PC-3 (cell line): ENCODE measurements at regions of chr14 and their contacts with region 1.

Region 1: DNA sequence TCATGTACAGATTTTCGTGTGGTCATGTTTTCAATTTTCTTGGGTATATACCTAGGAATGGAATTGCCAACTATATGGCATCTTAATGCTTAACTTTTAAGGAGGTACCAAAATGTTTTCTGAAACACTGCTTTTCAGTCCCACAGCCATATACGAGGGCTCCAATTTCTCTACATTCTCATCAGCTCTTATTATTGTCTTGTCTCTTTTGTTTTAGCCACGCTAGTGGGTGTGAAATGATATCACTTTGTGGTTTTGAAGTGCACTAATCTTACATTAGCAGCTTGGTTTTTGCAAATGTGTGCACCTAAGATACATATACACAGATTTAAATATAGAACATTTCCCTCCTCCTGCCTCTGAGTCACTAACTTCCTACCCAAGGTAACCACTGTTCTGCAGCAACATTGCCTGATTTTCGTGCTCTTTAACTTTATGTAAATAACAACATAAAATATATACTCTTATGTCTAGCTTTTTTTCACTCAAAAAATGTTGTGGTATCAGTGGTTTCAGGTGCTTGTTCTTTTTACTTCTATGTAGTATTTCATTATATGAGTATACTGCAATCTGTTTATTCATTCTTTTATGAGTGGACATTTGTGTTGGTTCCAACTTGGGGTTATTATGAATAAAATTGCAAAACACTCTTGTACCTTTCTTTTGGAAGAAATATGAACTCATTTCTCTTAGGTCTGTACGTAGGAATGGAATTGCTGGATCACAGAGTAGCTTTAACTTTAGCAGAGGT is 73.1 kb downstream of the ZFP36L1 start:
- DNase-seq: no peak
- ATAC-seq: no peak
- H3K4me3 ChIP-seq: no peak overlapping the region
- H3K27ac ChIP-seq: no peak overlapping the region
- H3K4me1 ChIP-seq: no peaks in the 10 kb centered on the region
- H3K27me3 ChIP-seq: no peaks in the 10 kb centered on the region
- CTCF ChIP-seq: no peak

Region 2: GRCh38 chr14:68513838-68514620 is 205.8 kb before region 1 on chr14:
- CTCF ChIA-PET with region 1: no interaction called
- POLR2A ChIA-PET with region 1: no interaction called
- intact Hi-C with region 1: no loop called
- DNase-seq: no peak
- ATAC-seq: no peak
- H3K4me3 ChIP-seq: no peak overlapping the region
- H3K27ac ChIP-seq: no peak overlapping the region
- H3K4me1 ChIP-seq: peaks cover 19% of the 10 kb centered on the region
- H3K27me3 ChIP-seq: no peaks in the 10 kb centered on the region
- CTCF ChIP-seq: no peak

Region 3: DNA sequence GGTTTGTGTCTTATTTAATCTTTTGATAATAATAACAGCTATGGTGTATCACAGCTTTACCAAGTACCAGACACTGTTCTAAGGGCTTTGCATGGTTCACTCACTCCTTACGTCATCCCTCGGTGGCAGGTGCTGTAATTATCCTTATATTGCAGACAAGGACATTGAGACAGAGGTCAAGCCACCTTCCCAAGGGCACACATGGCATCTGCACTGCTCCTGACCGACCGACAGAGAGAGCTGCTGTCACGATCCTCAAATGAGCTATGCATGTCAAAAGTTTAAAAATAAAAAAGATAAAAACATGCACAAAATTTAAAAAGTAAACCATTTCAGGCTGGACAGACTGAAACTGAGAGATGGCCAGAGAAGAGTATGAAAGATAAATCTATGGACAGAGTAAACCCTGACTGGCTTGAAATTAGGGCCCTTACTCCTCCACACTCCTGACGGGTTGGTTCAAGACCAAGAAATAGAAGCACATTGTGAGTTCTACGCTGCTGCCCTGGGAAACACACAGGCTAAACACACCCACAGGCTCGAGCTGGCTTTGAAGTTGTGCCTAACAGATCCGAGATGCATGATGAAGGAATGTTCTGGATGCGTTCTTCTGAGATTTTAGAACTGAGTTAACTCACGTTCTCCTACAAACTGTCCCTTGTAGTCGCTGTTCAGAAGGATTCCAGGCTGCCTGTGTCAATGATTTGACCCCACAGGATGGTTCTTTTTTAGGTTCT is 195.7 kb before region 1 on chr14:
- CTCF ChIA-PET with region 1: no interaction called
- POLR2A ChIA-PET with region 1: no interaction called
- intact Hi-C with region 1: no loop called
- DNase-seq: no peak
- ATAC-seq: no peak
- H3K4me3 ChIP-seq: no peak overlapping the region
- H3K27ac ChIP-seq: no peak overlapping the region
- H3K4me1 ChIP-seq: peaks cover 28% of the 10 kb centered on the region
- H3K27me3 ChIP-seq: no peaks in the 10 kb centered on the region
- CTCF ChIP-seq: no peak

Region 4: DNA sequence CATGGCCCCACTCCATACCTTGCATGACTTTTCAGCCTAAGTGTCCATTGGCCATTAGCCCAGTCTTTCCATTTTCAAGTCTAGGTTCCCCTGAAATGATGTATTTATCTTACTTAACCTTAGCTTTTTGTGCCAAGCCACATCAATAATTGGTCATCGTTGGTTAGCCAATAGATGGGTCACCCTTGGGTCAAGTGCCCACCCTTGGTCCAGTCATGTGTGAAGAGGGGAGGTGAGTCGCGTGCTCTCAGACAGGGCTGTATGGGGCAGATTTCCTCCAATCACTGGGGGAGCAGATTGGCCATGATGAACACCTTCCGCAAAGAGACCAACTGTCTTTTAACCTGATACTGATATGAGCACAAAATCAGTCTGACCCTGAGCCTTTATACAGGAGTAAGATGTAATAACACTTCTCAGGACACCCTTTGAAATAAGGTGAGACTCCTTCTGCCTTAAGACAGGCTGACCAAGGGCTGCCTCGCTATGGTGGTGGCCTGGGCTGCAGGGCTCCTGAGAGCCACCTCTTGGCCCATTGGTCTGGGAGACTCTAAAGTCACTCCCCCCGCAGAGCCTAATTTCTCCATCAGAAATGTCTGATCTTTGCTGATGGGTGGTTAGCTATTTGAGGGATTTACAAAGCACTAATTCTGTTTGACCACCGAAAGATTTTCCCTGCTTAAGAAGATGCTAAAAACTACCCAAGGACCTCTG is 70.2 kb before region 1 on chr14:
- CTCF ChIA-PET with region 1: no interaction called
- POLR2A ChIA-PET with region 1: no interaction called
- intact Hi-C with region 1: no loop called
- DNase-seq: no peak
- ATAC-seq: no peak
- H3K4me3 ChIP-seq: no peak overlapping the region
- H3K27ac ChIP-seq: no peak overlapping the region
- H3K4me1 ChIP-seq: no peaks in the 10 kb centered on the region
- H3K27me3 ChIP-seq: no peaks in the 10 kb centered on the region
- CTCF ChIP-seq: no peak

Region 5: DNA sequence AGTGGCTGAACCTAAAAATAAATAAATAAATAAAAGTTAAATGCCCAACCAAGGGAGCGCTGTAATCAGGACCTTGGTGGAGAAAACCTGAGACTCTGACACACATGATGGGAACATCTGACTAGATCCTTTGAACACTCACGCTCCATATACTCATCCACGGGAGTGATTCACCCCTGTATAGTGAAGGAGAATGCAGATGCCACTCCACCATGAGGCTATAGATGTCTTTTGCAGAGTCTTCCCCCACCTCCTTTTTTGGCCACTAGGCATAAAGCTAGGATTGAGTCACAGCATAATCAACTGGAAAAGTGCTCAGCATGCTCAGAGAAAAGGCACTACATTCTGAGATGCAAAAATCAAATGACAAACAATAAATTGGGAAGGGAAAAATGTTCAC is 1796.0 kb after region 1 on chr14:
- CTCF ChIA-PET with region 1: no interaction called
- POLR2A ChIA-PET with region 1: interaction called, 20 read pairs
- intact Hi-C with region 1: no loop called
- DNase-seq: peak; percentile 32
- ATAC-seq: peak; percentile 36; the same call in 1 of the 2 replicates
- H3K4me3 ChIP-seq: no peak overlapping the region
- H3K27ac ChIP-seq: no peak overlapping the region
- H3K4me1 ChIP-seq: no peaks in the 10 kb centered on the region
- H3K27me3 ChIP-seq: no peaks in the 10 kb centered on the region
- CTCF ChIP-seq: no peak